CD14-positive monocyte (primary cell): ENCODE measurements at regions of chr3 and their contacts with region 1.

Region 1: DNA sequence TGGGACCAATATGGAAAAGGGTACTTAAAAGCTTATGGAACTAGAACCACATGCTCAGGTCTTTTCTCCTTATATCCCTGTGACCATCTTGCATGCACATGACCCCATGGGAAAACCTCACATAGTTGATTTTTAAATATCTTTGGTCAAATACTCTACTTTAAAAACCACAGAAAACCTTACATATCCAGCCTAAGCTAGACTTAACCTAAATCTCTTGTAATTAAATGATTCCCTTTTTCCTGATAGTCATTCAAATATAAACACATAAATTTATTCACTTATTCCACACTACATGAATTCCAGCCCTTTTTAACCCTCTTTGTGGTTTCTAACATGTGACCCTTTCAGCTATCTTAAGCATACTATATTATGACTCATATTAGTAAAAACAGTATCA is 46.8 kb downstream of the DNAJC13 start:
- DNase-seq: no peak
- H3K4me3 ChIP-seq: no peak overlapping the region
- H3K4me3 Mint-ChIP-seq: no peak overlapping the region
- H3K27ac ChIP-seq: no peak overlapping the region
- H3K27ac Mint-ChIP-seq: no peak overlapping the region
- H3K4me1 ChIP-seq: peaks cover 3 to 6% of the 10 kb centered on the region in 2 donors
- H3K4me1 Mint-ChIP-seq: peaks cover 3% of the 10 kb centered on the region
- H3K27me3 ChIP-seq: no peaks in the 10 kb centered on the region
- H3K27me3 Mint-ChIP-seq: no peaks in the 10 kb centered on the region
- CTCF ChIP-seq: no peak

Region 2: GRCh38 chr3:132368962-132369361 is 95.1 kb before region 1 on chr3:
- intact Hi-C with region 1: loop called in 1 of 2 experiments (anchors 10 kb)
- DNase-seq: no peak
- H3K4me3 ChIP-seq: no peak overlapping the region
- H3K4me3 Mint-ChIP-seq: no peak overlapping the region
- H3K27ac ChIP-seq: no peak overlapping the region
- H3K27ac Mint-ChIP-seq: no peak overlapping the region
- H3K4me1 ChIP-seq: no peaks in the 10 kb centered on the region
- H3K4me1 Mint-ChIP-seq: no peaks in the 10 kb centered on the region
- H3K27me3 ChIP-seq: no peaks in the 10 kb centered on the region
- H3K27me3 Mint-ChIP-seq: no peaks in the 10 kb centered on the region
- CTCF ChIP-seq: no peak